Activated CD4-positive, alpha-beta T cell treated with anti-CD3 and anti-CD28 coated beads for 36 hours (primary cell): ENCODE measurements at regions of chr5 and their contacts with region 1.

Region 1: GRCh38 chr5:124210111-124210918 is 536.1 kb downstream of the ZNF608 start:
- DNase-seq: no peak
- ATAC-seq: no peak
- H3K4me3 Mint-ChIP-seq: no peak overlapping the region
- H3K27ac Mint-ChIP-seq: no peak overlapping the region
- H3K4me1 Mint-ChIP-seq: no peaks in the 10 kb centered on the region
- H3K27me3 Mint-ChIP-seq: no peaks in the 10 kb centered on the region

Region 2: GRCh38 chr5:124193371-124193789 is 16.9 kb before region 1 on chr5:
- CTCF ChIA-PET with region 1: no interaction called
- POLR2A ChIA-PET with region 1: no interaction called
- intact Hi-C with region 1: loop called in 1 of 2 experiments (anchors 1 kb)
- DNase-seq: no peak
- ATAC-seq: no peak
- H3K4me3 Mint-ChIP-seq: no peak overlapping the region
- H3K27ac Mint-ChIP-seq: no peak overlapping the region
- H3K4me1 Mint-ChIP-seq: no peaks in the 10 kb centered on the region
- H3K27me3 Mint-ChIP-seq: no peaks in the 10 kb centered on the region

Region 3: DNA sequence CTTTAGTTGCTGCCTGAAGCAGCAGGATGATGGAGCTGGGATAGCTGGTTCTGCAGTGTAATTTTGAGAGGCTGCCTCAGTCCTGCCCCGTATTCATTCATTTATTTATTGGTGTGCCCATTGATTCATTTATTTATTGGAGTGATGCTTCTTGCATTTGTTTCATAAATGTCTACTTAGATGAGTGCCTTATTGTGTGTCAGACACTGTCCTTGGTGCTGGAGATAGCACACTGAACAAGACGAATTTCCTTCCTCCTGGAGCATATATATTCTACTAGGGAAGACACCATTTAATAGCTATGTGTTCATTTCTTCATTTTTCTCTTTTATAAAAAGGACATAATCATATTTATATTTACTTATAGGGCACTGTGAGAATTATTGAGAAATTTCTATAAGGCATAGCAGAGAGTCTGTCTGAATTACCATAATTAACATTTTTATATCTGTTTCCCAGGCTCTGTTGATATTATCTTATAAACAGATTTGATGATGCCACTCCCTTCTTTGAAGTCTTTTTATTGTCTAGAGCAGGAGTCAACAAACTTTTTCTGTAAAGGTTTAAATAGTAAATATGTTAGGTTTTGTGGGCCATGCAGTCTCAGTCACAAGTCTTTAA is 970.0 kb after region 1 on chr5:
- CTCF ChIA-PET with region 1: no interaction called
- POLR2A ChIA-PET with region 1: no interaction called
- intact Hi-C with region 1: no loop called
- DNase-seq: no peak
- ATAC-seq: no peak
- H3K4me3 Mint-ChIP-seq: no peak overlapping the region
- H3K27ac Mint-ChIP-seq: no peak overlapping the region
- H3K4me1 Mint-ChIP-seq: no peaks in the 10 kb centered on the region
- H3K27me3 Mint-ChIP-seq: no peaks in the 10 kb centered on the region